ENCODE measurements at regions of chr2 and their contacts with region 1.

Region 1: GRCh38 chr2:152755029-152755428 is 36.6 kb downstream of the ARL6IP6 start:
- DNase-seq: no peak
- H3K4me3 ChIP-seq: no peak overlapping the region
- H3K27ac ChIP-seq: no peak overlapping the region
- H3K4me1 ChIP-seq: no peaks in the 10 kb centered on the region
- H3K27me3 ChIP-seq: no peaks in the 10 kb centered on the region
- CTCF ChIP-seq: no peak
- POLR2A ChIP-seq: no peak

Region 2: GRCh38 chr2:153474407-153474806 is 719.4 kb after region 1 on chr2:
- intact Hi-C with region 1: loop called (anchors 5 kb)
- DNase-seq: no peak
- H3K4me3 ChIP-seq: no peak overlapping the region
- H3K27ac ChIP-seq: no peak overlapping the region
- H3K4me1 ChIP-seq: no peaks in the 10 kb centered on the region
- H3K27me3 ChIP-seq: peaks cover 0 to 48% of the 10 kb centered on the region in 2 donors
- CTCF ChIP-seq: no peak
- POLR2A ChIP-seq: no peak

Measured in breast epithelium (tissue), 4 donors.